Dorsolateral prefrontal cortex (tissue), 120 donors: ENCODE measurements at regions of chr12 and their contacts with region 1.

Region 1: DNA sequence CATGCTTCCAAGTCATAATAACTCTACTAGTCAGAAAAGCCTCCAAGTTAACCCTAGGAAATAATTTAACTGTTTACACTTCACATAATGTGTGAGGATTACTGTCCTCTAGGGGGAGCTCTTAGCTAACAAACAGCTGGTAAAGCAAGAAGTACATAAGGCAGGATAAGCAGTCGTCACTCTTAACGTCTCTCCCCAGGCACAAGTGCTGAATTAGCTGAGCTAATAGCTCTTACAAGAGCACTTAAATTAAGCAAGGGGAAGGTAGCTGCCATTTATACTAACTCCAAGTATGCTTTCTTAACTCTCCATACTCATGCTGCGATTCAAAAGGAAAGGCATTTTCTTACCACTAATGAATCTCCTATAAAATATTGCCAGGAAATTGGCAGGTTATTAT is 79.3 kb upstream of the TSPAN11 start:
- DNase-seq: peak in 1 of 10 donors; percentile 10
- H3K4me3 ChIP-seq: no peak overlapping the region
- H3K27ac ChIP-seq: no peak overlapping the region
- H3K27me3 ChIP-seq: no peaks in the 10 kb centered on the region
- CTCF ChIP-seq: peak; percentile 57 to 85 (median 72)

Region 2: DNA sequence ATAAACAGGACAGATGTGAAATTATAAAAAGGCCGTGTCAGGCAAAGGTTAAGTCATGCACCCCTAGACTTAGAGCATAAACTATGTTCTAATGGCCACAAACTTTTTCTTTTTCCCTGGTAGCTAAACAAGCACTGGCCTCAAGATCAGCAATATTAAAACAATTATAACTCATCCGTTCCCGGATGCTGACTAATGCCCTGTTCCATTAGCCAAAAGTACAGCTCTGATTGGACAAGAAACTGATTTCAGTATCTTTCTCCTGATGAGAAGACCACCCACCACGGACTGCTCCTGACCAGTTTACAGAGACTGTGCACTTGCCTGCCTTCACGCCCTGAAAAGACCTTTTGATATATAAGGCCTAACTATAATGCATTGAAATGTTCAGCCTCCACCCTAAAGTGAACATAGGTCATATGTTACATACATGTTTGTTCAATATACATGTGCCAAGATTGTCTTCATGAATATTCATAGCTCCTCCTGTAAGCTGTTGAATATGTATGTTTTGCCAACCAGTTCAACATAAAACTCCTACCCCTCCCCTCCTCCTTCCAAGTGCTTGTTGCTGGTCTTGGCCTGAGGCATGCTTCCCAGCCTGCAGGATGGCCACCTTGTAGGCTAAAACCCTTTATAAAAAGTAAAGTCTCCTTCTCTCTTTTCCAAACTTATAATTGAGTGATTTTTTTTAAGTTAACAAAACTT is 313.5 kb before region 1 on chr12:
- intact Hi-C with region 1: no loop called
- DNase-seq: no peak
- H3K4me3 ChIP-seq: no peak overlapping the region
- H3K27ac ChIP-seq: no peak overlapping the region
- H3K27me3 ChIP-seq: peaks cover 0 to 3% (median 0%) of the 10 kb centered on the region in 45 donors
- CTCF ChIP-seq: no peak

Region 3: GRCh38 chr12:30985814-30986452 is 138.7 kb after region 1 on chr12:
- intact Hi-C with region 1: loop called (anchors 2 kb)
- DNase-seq: peak; percentile 65 to 87 (median 74)
- H3K4me3 ChIP-seq: no peak overlapping the region
- H3K27ac ChIP-seq: no peak overlapping the region
- H3K27me3 ChIP-seq: no peaks in the 10 kb centered on the region
- CTCF ChIP-seq: peak; percentile 39 to 93 (median 82)

Region 4: GRCh38 chr12:31238764-31239387 is 391.6 kb after region 1 on chr12:
- intact Hi-C with region 1: loop called (anchors 5 to 10 kb)
- DNase-seq: peak in 8 of 10 donors; percentile 39 to 75 (median 64)
- H3K4me3 ChIP-seq: peak overlapping the region in 17 of 59 donors; percentile 11 to 48 (median 25)
- H3K27ac ChIP-seq: no peak overlapping the region
- H3K27me3 ChIP-seq: peaks cover 0 to 17% (median 0%) of the 10 kb centered on the region in 45 donors
- CTCF ChIP-seq: peak; percentile 38 to 92 (median 68)

Region 5: DNA sequence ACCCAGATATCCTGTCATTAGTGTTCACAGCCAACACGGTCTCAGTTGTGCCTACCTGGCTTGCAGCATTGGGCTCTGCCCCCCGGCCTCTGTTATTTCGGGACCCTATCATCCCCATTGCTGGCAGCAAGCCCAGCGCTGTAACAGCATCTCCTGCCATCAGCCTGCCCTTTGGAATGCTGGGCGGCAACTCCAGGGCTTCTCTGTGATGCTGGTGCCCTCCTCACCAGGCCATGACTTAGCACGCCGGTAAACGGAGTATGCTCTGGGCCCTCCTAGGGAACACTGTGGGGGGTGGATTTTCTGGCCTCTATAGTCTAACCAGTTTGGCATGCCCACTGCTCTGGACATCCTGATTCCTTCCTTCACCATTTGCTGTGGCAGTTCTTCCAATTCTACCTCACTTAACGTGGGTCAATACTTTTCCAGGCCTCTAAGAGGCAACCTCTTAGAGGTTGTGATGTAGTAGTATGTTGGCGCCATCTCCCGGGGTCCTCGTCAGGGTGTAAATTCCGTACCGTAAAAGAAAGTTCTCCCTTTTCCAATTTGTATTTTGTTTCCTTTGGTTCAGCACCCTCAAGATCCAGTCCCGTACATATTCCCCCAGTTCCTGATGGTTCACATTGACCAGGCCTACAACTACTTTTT is 398.7 kb after region 1 on chr12:
- intact Hi-C with region 1: loop called in 1 of 2 experiments (anchors 10 kb)
- DNase-seq: no peak
- H3K4me3 ChIP-seq: no peak overlapping the region
- H3K27ac ChIP-seq: no peak overlapping the region
- H3K27me3 ChIP-seq: peaks cover 0 to 3% (median 0%) of the 10 kb centered on the region in 45 donors
- CTCF ChIP-seq: no peak

Region 6: GRCh38 chr12:31274520-31275300 is 427.5 kb after region 1 on chr12:
- intact Hi-C with region 1: loop called in 1 of 2 experiments (anchors 5 kb)
- DNase-seq: no peak
- H3K4me3 ChIP-seq: no peak overlapping the region
- H3K27ac ChIP-seq: no peak overlapping the region
- H3K27me3 ChIP-seq: no peaks in the 10 kb centered on the region
- CTCF ChIP-seq: no peak